Posterior vena cava (tissue), 2 donors: ENCODE measurements at regions of chr16 and their contacts with region 1.

Region 1: DNA sequence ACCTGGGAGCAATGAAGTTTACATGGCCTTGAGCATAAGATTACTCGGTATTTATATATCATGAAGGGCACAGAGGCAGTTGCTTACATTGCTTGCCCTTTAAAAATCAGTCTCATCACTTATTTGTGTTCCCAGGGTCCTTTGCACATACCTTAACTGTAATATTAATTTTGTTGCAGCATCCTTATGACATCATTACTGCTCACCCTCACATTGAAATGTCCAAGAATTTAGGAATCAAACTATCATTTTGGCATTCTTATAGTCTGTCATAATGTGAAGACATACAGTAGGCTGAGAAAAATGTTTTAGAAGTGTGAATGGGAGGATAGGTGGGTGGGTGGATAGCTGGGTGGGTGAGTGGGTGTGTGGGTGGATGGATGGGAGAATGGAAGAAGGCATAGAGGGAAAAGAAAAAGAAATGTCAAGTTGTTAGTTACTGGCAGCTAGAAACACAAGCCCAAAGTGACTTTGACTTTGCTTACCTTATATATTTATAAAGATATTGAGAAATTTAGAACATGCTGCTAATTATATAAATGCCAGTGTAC is 17.8 kb downstream of the ADAMTS18 start:
- DNase-seq: no peak

Region 2: GRCh38 chr16:77439106-77439505 is 22.1 kb after region 1 on chr16:
- intact Hi-C with region 1: loop called in 1 of 2 experiments (anchors 1 kb)
- DNase-seq: no peak

Region 3: DNA sequence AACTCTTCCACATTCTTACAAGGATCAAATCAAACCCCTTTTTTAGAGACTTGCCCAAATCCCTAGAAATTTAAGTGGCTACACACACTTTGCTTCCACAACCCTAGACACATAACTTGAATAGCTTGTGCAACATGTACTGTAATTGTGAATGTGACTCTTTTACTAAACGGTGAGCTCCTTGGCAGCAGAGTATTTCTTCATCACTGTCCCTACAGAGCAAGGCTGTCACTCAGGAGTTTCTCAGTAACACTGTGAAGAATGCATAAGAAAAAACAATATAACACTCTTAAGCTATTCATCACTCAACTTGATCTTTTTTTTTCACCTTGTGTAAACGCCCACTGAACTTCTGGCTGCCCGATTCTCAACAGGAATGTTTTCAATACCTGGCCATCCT is 71.6 kb after region 1 on chr16:
- intact Hi-C with region 1: no loop called
- DNase-seq: no peak